ENCODE measurements at regions of chr12 and their contacts with region 1.

Region 1: DNA sequence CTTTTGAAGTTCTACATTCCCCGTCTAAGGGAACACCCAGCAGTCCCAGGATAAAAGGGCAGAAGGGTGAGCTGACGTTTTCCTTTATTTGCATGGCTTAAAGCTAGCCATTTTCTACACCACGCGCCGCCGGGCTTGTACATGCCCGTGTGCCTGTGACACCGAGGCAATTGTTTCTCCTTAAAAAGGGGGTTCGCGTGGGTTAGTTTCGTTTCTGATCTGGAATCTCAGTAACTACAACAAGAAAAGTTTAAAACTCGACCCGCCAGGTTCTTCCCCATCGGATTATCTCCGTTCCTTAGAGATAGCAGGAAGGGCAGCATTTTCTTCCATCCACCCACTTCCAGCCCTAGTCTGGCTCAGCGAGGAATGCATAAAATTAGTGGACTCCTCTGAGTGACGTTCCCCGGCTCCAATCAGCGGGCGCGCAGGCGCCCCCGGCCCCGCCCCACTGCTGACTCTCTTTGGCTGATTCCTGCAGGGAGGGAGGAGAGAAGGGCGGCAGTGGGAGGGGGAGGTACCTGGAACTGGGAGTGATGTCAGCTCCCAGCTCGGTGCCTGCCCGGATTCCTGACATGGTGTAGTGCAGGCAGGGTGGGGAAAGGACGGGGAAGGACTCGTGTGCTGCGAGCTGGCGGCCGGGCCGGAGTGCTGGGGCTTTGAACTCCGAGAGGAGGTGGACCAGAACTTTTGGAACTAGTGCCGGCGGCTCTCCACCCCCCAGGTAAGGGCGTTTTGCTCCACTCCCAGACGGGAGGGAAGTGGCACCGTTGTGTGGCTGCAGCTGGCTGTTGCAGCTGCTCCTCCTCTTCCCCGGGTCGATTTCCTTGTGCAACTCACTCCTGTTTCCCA is at the start of gene PPFIBP1:
- DNase-seq: peak; percentile 99
- H3K4me3 ChIP-seq: peak within 1 kb of the TSS; percentile 65 to 95 (median 80)
- H3K27ac ChIP-seq: peak within 1 kb of the TSS; percentile 77
- H3K4me1 ChIP-seq: peaks cover 25% of the 10 kb centered on the region
- H3K27me3 ChIP-seq: no peaks in the 10 kb centered on the region
- CTCF ChIP-seq: peak in 1 of 2 donors; percentile 49
- POLR2A ChIP-seq: peak; percentile 90
- total RNA-seq, gene PPFIBP1: 154 TPM in 2 replicates

Region 2: DNA sequence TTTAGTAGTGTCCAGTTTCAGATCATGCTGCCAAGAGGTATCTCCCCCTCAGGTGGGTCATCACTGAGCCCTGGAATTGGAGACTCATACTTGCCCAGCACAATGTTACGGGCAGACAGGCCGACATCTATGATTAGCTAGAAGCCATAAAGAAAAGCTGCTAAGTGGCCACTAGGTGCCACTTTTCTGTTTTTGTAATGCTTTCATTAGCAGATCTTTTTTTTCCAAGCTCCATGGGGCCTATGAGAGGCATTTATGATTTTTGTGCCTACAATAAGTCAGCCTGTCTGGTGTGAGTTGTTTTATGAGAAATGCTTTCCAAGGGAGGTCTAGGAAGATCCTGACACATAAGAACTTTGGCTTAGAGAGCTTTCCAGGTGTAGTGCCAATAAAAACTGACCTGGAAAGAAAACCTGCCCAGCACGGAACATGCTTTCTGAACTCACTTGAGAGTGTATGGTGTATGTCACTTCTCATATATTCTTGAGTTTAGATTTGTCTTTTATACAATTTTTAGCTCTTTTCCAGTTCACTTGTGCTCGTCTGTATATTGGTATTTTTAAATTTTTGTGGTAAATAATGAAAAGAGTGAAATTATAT is 99.1 kb before region 1 on chr12:
- CTCF ChIA-PET with region 1: interaction called, 30 read pairs
- POLR2A ChIA-PET with region 1: no interaction called
- dilution Hi-C with region 1: no loop called
- intact Hi-C with region 1: loop called (anchors 2 kb)
- DNase-seq: peak; percentile 65
- H3K4me3 ChIP-seq: no peak overlapping the region
- H3K27ac ChIP-seq: no peak overlapping the region
- H3K4me1 ChIP-seq: no peaks in the 10 kb centered on the region
- H3K27me3 ChIP-seq: no peaks in the 10 kb centered on the region
- CTCF ChIP-seq: peak; percentile 56 to 65
- POLR2A ChIP-seq: no peak

Region 3: GRCh38 chr12:27462151-27462694 is 61.6 kb before region 1 on chr12:
- CTCF ChIA-PET with region 1: interaction called, 23 read pairs
- POLR2A ChIA-PET with region 1: interaction called, 13 read pairs
- dilution Hi-C with region 1: no loop called
- intact Hi-C with region 1: loop called (anchors 1 kb)
- DNase-seq: peak; percentile 97
- H3K4me3 ChIP-seq: peak overlapping the region in 1 of 3 experiments; percentile 33
- H3K27ac ChIP-seq: peak overlapping the region; percentile 88
- H3K4me1 ChIP-seq: peaks cover 40% of the 10 kb centered on the region
- H3K27me3 ChIP-seq: no peaks in the 10 kb centered on the region
- CTCF ChIP-seq: no peak
- POLR2A ChIP-seq: peak; percentile 29

Region 4: GRCh38 chr12:27474344-27474743 is 49.5 kb before region 1 on chr12:
- CTCF ChIA-PET with region 1: no interaction called
- POLR2A ChIA-PET with region 1: no interaction called
- dilution Hi-C with region 1: no loop called
- intact Hi-C with region 1: no loop called
- DNase-seq: no peak
- H3K4me3 ChIP-seq: no peak overlapping the region
- H3K27ac ChIP-seq: no peak overlapping the region
- H3K4me1 ChIP-seq: no peaks in the 10 kb centered on the region
- H3K27me3 ChIP-seq: no peaks in the 10 kb centered on the region
- CTCF ChIP-seq: no peak
- POLR2A ChIP-seq: no peak

Region 5: GRCh38 chr12:27549801-27550652 is 26.2 kb after region 1 on chr12:
- CTCF ChIA-PET with region 1: interaction called, 18 read pairs
- POLR2A ChIA-PET with region 1: interaction called, 11 read pairs
- dilution Hi-C with region 1: no loop called
- intact Hi-C with region 1: loop called (anchors 1 kb)
- DNase-seq: peak; percentile 89
- H3K4me3 ChIP-seq: peak overlapping the region in 1 of 3 experiments; percentile 20
- H3K27ac ChIP-seq: peak overlapping the region; percentile 79
- H3K4me1 ChIP-seq: peaks cover 66% of the 10 kb centered on the region
- H3K27me3 ChIP-seq: no peaks in the 10 kb centered on the region
- CTCF ChIP-seq: no peak
- POLR2A ChIP-seq: no peak

Region 6: GRCh38 chr12:27573972-27574371 is 50.1 kb after region 1 on chr12:
- CTCF ChIA-PET with region 1: interaction called, 7 read pairs
- POLR2A ChIA-PET with region 1: interaction called, 9 read pairs
- dilution Hi-C with region 1: no loop called
- intact Hi-C with region 1: loop called (anchors 1 kb)
- DNase-seq: peak; percentile 92
- H3K4me3 ChIP-seq: no peak overlapping the region
- H3K27ac ChIP-seq: peak overlapping the region; percentile 92
- H3K4me1 ChIP-seq: peaks cover 76% of the 10 kb centered on the region
- H3K27me3 ChIP-seq: no peaks in the 10 kb centered on the region
- CTCF ChIP-seq: no peak
- POLR2A ChIP-seq: no peak

Region 7: DNA sequence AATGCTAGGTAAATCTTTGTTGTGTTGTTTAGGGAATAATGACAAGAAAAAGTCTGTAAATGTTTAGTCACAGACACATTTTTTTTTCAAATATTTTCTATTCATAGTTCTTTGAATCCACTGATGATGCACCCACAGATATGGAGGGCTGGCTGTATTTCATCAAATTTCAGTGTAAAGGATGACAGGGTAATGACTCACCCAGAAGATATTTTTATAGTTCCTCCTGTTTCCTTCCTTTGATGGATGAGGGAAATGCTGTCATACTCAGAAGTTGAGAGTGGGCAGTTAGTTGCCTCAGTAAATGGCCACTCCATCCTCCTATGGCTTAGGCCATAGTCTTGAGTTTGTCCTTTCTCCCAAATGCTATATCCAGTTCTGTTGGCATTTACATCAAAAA is 95.4 kb after region 1 on chr12:
- CTCF ChIA-PET with region 1: interaction called, 3 read pairs
- POLR2A ChIA-PET with region 1: no interaction called
- dilution Hi-C with region 1: no loop called
- intact Hi-C with region 1: loop called (anchors 1 kb)
- DNase-seq: peak; percentile 87
- H3K4me3 ChIP-seq: no peak overlapping the region
- H3K27ac ChIP-seq: peak overlapping the region; percentile 71
- H3K4me1 ChIP-seq: peaks cover 76% of the 10 kb centered on the region
- H3K27me3 ChIP-seq: no peaks in the 10 kb centered on the region
- CTCF ChIP-seq: no peak
- POLR2A ChIP-seq: peak; percentile 51

Region 8: GRCh38 chr12:27635349-27635972 is 111.6 kb after region 1 on chr12:
- CTCF ChIA-PET with region 1: interaction called, 5 read pairs
- POLR2A ChIA-PET with region 1: no interaction called
- dilution Hi-C with region 1: no loop called
- intact Hi-C with region 1: loop called (anchors 1 kb)
- DNase-seq: peak; percentile 61
- H3K4me3 ChIP-seq: no peak overlapping the region
- H3K27ac ChIP-seq: no peak overlapping the region
- H3K4me1 ChIP-seq: peaks cover 19% of the 10 kb centered on the region
- H3K27me3 ChIP-seq: no peaks in the 10 kb centered on the region
- CTCF ChIP-seq: peak; percentile 28 to 39
- POLR2A ChIP-seq: no peak

Measured in endothelial cell of umbilical vein (primary cell).